ENCODE measurements at regions of chr3 and their contacts with region 1.

Region 1: DNA sequence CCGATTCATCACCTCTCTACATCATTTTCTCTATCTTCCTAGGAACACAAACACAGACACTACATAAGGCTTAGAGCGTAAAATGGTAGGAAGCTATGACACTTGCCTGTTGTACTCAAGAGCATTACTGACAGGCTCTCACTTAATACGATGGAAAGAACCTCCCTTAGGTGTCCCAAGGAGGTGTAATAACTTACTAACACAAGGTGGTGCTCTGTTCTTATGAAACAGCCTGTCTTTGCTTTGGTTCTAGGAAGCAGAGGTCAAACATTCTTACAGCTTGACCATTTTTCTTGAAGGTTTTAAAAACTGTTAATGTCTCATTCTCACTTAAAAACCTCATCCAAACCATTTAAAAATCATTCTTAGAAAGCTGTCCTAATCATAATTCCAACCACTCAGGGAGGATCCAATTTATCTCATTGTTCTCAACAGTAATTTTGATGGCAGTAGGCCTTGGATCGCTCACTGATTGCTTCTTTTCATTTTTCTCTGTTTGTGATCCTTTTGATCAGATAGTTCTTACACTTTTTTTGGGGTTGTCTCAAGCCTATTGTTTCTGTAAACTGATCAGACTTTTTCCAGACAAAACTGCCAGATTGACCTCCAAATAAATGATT is 317.8 kb upstream of the AGTR1 start:
- DNase-seq: peak; percentile 80
- H3K4me3 ChIP-seq: no peak overlapping the region
- H3K27ac ChIP-seq: no peak overlapping the region
- H3K4me1 ChIP-seq: no peaks in the 10 kb centered on the region
- H3K27me3 ChIP-seq: no peaks in the 10 kb centered on the region

Region 2: GRCh38 chr3:148718982-148719862 is 339.3 kb after region 1 on chr3:
- in situ Hi-C with region 1: loop called (anchors 10 kb)
- DNase-seq: peak; percentile 53
- H3K4me3 ChIP-seq: no peak overlapping the region
- H3K27ac ChIP-seq: no peak overlapping the region
- H3K4me1 ChIP-seq: peaks cover 26% of the 10 kb centered on the region
- H3K27me3 ChIP-seq: no peaks in the 10 kb centered on the region

Region 3: DNA sequence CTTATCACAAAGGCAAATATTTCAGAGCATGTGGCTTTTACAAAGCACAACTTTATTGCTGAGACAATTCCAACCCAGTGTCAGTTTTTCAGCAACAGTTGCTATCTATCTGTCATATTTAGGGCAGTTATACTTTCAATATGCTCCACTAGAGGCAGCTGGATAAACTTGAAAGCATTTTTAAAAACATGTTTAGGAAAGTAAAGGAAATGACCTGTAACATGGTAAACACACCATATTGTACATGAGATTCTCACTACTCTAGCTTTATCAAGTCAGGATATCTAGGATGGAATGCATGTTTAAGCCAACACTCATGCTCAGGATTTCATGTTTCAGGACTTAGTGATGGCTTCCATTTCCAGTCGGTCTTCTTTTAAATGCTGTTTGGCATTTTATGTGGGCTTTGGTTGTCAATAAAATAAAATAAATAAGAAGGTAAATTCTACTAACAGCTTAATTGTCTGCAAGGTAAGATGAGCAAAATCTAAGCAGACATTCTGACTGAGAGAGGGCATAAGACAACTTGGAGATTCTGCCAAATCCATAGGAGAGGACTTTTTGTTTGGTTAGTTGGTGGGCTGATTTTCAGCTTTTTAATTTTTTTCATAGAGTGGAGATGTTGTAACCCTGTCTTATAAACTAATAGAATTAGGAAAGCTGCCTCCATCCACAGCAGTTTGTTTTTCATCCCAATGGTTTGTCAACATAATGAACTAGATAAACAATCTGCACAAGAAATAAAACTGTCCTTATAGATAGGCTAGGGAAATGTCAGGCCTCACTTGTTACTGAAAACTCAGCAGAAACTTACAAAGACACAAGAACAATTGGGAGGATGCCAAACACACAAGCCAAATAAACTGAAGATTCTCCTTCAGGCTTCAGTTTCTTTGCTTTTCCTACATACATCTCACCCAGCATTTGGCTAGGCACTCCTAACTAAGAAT is 384.4 kb after region 1 on chr3:
- in situ Hi-C with region 1: no loop called
- DNase-seq: no peak
- H3K4me3 ChIP-seq: no peak overlapping the region
- H3K27ac ChIP-seq: no peak overlapping the region
- H3K4me1 ChIP-seq: no peaks in the 10 kb centered on the region
- H3K27me3 ChIP-seq: no peaks in the 10 kb centered on the region